Endothelial cell of umbilical vein (primary cell): ENCODE measurements at regions of chr7 and their contacts with region 1.

Region 1: DNA sequence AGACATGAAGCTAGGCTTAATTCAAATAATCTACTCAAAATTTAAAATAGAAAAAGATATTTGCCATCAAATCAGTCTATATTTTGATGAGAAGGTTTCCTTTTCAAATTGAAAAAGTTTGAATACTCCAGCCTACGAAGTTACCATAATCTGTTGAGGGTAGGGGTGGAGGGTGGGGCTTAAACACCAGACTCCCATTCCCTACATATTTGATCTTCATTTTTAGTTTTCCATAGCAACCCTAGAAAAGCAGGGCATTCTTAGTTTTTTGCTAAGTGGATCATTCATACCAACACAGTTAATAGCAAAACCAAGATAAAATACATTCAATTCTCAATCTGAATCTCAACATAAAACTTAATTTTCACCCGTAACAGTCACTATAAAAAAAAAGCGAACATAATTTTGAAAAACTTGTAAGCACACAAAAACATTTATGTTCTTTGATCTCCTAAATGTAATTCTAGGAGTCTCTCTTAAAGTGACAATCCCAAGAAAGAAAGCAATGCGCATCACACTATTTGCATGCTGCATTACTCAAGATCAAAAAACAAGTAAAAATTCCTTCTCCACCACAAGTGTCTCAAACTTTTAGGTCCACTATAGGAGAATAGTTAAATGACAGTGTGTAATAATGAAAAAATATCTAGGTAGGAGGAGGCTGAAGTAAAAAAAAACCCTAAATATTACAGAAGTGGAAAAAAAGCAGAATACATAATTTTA is 30.8 kb downstream of the TMEM209 start:
- DNase-seq: no peak
- H3K4me3 ChIP-seq: no peak overlapping the region
- H3K27ac ChIP-seq: no peak overlapping the region
- H3K4me1 ChIP-seq: no peaks in the 10 kb centered on the region
- H3K27me3 ChIP-seq: no peaks in the 10 kb centered on the region
- CTCF ChIP-seq: no peak
- POLR2A ChIP-seq: no peak

Region 2: GRCh38 chr7:130227883-130228575 is 53.6 kb after region 1 on chr7:
- CTCF ChIA-PET with region 1: no interaction called
- POLR2A ChIA-PET with region 1: no interaction called
- dilution Hi-C with region 1: no loop called
- intact Hi-C with region 1: loop called (anchors 2 kb)
- DNase-seq: no peak
- H3K4me3 ChIP-seq: no peak overlapping the region
- H3K27ac ChIP-seq: no peak overlapping the region
- H3K4me1 ChIP-seq: no peaks in the 10 kb centered on the region
- H3K27me3 ChIP-seq: no peaks in the 10 kb centered on the region
- CTCF ChIP-seq: no peak
- POLR2A ChIP-seq: no peak

Region 3: DNA sequence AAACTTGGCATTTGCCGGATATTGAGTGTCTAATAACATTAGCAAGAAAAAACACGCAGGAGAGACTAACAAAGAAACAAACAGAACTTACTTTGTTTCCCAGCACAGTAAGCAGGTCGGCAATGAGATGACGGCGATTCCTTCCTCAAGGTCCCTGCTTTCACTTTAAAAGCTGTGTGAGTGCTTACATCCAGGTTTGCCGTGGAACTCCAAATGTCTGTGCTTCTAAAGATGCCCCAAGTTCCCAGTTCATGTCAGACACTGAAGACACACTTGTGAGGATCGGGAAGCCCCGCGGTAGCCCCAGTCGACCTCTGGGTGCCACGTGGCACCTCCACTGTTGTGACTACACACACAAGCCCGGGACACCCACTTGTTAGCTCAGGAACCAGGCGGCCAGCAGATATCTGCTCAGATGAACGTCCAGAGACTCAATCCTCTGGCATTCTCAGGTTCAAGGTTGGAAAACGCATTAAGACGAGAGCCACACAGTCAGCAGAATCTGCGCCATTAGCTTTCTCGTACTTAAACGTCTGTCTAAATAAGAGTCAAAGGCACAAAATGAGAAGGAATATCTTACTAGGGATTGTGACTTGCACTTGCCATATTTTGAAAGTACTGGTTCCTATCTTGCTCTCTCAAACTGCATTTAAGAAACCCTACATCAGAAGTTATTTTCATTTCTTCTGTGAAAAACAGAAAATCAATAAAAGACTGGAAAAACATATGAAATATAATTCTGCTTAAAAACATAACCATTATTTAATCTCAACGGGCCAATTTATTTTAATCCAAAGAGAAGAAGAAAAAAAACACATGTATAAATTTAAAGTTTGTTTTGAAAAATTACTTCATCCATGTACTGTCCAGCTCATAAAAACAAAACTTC is 767.2 kb after region 1 on chr7:
- CTCF ChIA-PET with region 1: no interaction called
- POLR2A ChIA-PET with region 1: no interaction called
- dilution Hi-C with region 1: no loop called
- intact Hi-C with region 1: no loop called
- DNase-seq: peak; percentile 55
- H3K4me3 ChIP-seq: peak overlapping the region; percentile 6 to 29 (median 25)
- H3K27ac ChIP-seq: peak overlapping the region; percentile 14
- H3K4me1 ChIP-seq: peaks cover 13% of the 10 kb centered on the region
- H3K27me3 ChIP-seq: no peaks in the 10 kb centered on the region
- CTCF ChIP-seq: no peak
- POLR2A ChIP-seq: no peak